Heart left ventricle (tissue), 16 donors: ENCODE measurements at regions of chr6 and their contacts with region 1.

Region 1: GRCh38 chr6:9360881-9361280 is 925.5 kb upstream of the SLC35B3 start:
- DNase-seq: no peak
- ATAC-seq: no peak
- H3K4me3 ChIP-seq: no peak overlapping the region
- H3K27ac ChIP-seq: no peak overlapping the region
- H3K4me1 ChIP-seq: peaks cover 0 to 7% (median 0%) of the 10 kb centered on the region in 12 donors
- H3K27me3 ChIP-seq: no peaks in the 10 kb centered on the region
- CTCF ChIP-seq: no peak
- POLR2A ChIP-seq: no peak

Region 2: GRCh38 chr6:9398071-9398766 is 37.3 kb after region 1 on chr6:
- intact Hi-C with region 1: loop called in 1 of 10 experiments (anchors 1 kb)
- DNase-seq: peak; percentile 62 to 85 (median 66)
- ATAC-seq: peak; percentile 97 to 99 (median 98)
- H3K4me3 ChIP-seq: peak overlapping the region in 8 of 12 donors; percentile 31 to 46 (median 40)
- H3K27ac ChIP-seq: peak overlapping the region in 10 of 12 donors; percentile 6 to 87 (median 56)
- H3K4me1 ChIP-seq: peaks cover 0 to 15% (median 0%) of the 10 kb centered on the region in 12 donors
- H3K27me3 ChIP-seq: peaks cover 0 to 10% (median 0%) of the 10 kb centered on the region in 9 donors
- CTCF ChIP-seq: no peak
- POLR2A ChIP-seq: no peak